ENCODE measurements at regions of chr17 and their contacts with region 1.

Region 1: GRCh38 chr17:77331301-77331864 is 190.6 kb downstream of the SEC14L1 start:
- DNase-seq: peak; percentile 90 to 96 (median 92)
- H3K4me3 ChIP-seq: peak overlapping the region; percentile 50
- H3K4me3 Mint-ChIP-seq: peak overlapping the region; percentile 73 to 91 (median 84)
- H3K27ac ChIP-seq: peak overlapping the region; percentile 45
- H3K27ac Mint-ChIP-seq: peak overlapping the region; percentile 83 to 96 (median 92)
- H3K4me1 ChIP-seq: peaks cover 46% of the 10 kb centered on the region
- H3K4me1 Mint-ChIP-seq: peaks cover 36 to 52% (median 49%) of the 10 kb centered on the region in 3 donors
- H3K27me3 ChIP-seq: no peaks in the 10 kb centered on the region
- H3K27me3 Mint-ChIP-seq: peaks cover 0 to 5% of the 10 kb centered on the region in 2 donors

Region 2: GRCh38 chr17:77178563-77178962 is 152.8 kb before region 1 on chr17:
- CTCF ChIA-PET with region 1: no interaction called
- POLR2A ChIA-PET with region 1: no interaction called
- DNase-seq: no peak
- H3K4me3 ChIP-seq: no peak overlapping the region
- H3K4me3 Mint-ChIP-seq: no peak overlapping the region
- H3K27ac ChIP-seq: no peak overlapping the region
- H3K27ac Mint-ChIP-seq: no peak overlapping the region
- H3K4me1 ChIP-seq: peaks cover 26% of the 10 kb centered on the region
- H3K4me1 Mint-ChIP-seq: peaks cover 27 to 42% (median 40%) of the 10 kb centered on the region in 3 donors
- H3K27me3 ChIP-seq: no peaks in the 10 kb centered on the region
- H3K27me3 Mint-ChIP-seq: peaks cover 0 to 3% of the 10 kb centered on the region in 2 donors

Region 3: DNA sequence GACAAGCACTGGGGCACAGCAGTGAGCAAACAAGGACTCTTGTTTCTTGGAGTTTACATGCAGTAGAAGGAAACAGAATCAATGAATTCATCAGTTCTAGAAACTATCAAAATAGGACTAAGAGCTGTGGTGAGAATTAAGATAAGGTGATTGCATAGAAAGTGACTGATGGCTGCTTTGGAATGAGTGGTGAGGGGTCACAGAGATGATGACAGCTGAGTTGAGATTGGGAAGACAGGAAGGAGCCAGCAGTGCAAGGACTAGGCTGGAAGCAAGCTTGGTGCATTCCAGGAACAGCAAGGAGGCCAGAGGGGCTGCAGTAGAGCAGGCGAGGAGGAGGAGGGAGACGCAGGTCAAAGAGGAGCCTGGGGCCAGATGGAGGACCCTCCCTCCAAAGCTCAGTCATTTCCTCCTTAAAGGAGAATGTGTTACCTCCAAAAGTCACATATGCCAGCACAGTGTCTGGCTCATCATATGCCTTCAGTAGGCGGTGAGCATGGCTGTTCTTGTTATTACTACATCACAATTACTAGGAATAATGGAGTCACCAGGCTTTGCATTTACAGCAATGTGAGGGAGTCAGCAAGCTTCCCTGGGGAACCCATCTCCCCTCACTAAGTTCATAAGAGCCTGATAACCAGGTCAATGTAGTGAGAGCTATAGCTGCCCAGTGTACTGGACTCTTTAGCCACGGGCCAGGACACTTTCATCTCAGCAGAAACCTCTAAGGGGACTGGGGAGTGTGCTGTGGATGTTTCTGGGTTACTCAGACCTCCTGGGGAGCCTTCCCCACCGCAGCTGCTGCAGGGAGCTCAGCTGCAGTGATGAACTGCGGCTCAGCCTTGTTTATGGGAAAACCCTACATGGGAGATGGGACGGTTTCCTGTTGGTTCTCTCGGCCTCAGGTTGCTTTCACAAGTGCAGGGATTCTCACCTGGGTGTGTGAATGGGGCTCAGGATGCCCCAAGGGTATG is 33.4 kb before region 1 on chr17:
- CTCF ChIA-PET with region 1: no interaction called
- POLR2A ChIA-PET with region 1: no interaction called
- DNase-seq: no peak
- H3K4me3 ChIP-seq: no peak overlapping the region
- H3K4me3 Mint-ChIP-seq: no peak overlapping the region
- H3K27ac ChIP-seq: no peak overlapping the region
- H3K27ac Mint-ChIP-seq: peak overlapping the region in 2 of 8 donors; percentile 10 to 19
- H3K4me1 ChIP-seq: no peaks in the 10 kb centered on the region
- H3K4me1 Mint-ChIP-seq: no peaks in the 10 kb centered on the region
- H3K27me3 ChIP-seq: no peaks in the 10 kb centered on the region
- H3K27me3 Mint-ChIP-seq: peaks cover 2 to 7% of the 10 kb centered on the region in 2 donors

Region 4: GRCh38 chr17:77349976-77350830 is 18.8 kb after region 1 on chr17:
- CTCF ChIA-PET with region 1: interaction called, 5 read pairs
- POLR2A ChIA-PET with region 1: interaction called, 12 read pairs
- DNase-seq: peak in 1 of 5 donors; percentile 13
- H3K4me3 ChIP-seq: no peak overlapping the region
- H3K4me3 Mint-ChIP-seq: no peak overlapping the region
- H3K27ac ChIP-seq: no peak overlapping the region
- H3K27ac Mint-ChIP-seq: no peak overlapping the region
- H3K4me1 ChIP-seq: peaks cover 14% of the 10 kb centered on the region
- H3K4me1 Mint-ChIP-seq: peaks cover 19 to 34% (median 34%) of the 10 kb centered on the region in 3 donors
- H3K27me3 ChIP-seq: no peaks in the 10 kb centered on the region
- H3K27me3 Mint-ChIP-seq: no peaks in the 10 kb centered on the region

Region 5: GRCh38 chr17:77382966-77383612 is 51.7 kb after region 1 on chr17:
- CTCF ChIA-PET with region 1: interaction called, 55 read pairs
- POLR2A ChIA-PET with region 1: interaction called, 7 read pairs
- DNase-seq: no peak
- H3K4me3 ChIP-seq: peak overlapping the region; percentile 62
- H3K4me3 Mint-ChIP-seq: peak overlapping the region; percentile 32 to 91 (median 78)
- H3K27ac ChIP-seq: no peak overlapping the region
- H3K27ac Mint-ChIP-seq: peak overlapping the region; percentile 87 to 96 (median 91)
- H3K4me1 ChIP-seq: peaks cover 94% of the 10 kb centered on the region
- H3K4me1 Mint-ChIP-seq: peaks cover 81 to 95% (median 88%) of the 10 kb centered on the region in 3 donors
- H3K27me3 ChIP-seq: no peaks in the 10 kb centered on the region
- H3K27me3 Mint-ChIP-seq: no peaks in the 10 kb centered on the region

Region 6: DNA sequence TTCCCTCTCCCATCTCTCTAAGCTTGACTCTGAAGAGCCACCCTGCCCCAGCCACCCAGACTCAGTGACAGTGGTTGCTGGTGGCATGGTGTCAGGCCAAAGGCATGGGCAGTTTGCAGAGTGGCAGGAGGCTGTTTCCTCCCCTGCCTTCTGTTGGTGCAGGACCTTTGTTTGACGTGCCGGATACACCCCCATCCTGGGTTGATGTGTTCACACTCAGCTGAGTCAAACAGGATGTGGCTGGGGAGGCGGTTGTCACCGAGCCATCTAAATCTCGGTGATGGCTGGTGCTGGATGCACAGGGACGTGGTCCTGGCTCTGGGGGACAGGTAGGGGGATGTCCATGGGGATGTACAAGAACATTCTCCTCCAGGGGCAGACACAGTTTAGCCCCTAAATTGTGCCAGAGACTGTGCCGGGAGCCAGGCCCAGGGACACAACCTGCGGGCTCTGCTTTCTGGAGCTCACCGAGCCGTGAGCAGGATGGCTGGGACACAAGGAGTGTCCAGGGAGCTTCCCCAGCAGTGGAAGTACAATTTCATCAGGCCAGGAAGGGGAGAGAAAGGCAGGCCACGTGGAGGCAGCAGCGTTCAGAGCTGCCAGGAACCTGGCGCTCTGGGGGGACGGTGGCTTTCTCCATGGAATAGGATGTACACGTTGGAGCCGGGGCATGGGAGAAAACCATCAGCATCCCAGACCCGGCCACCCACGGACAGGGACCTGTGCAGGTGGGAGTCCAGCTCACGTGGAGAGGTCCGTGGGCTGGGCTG is 73.6 kb after region 1 on chr17:
- CTCF ChIA-PET with region 1: interaction called, 61 read pairs
- POLR2A ChIA-PET with region 1: interaction called, 19 read pairs
- DNase-seq: peak; percentile 69 to 92 (median 83)
- H3K4me3 ChIP-seq: peak overlapping the region; percentile 89
- H3K4me3 Mint-ChIP-seq: peak overlapping the region; percentile 84 to 99 (median 96)
- H3K27ac ChIP-seq: peak overlapping the region; percentile 48
- H3K27ac Mint-ChIP-seq: peak overlapping the region; percentile 88 to 99 (median 98)
- H3K4me1 ChIP-seq: peaks cover 93% of the 10 kb centered on the region
- H3K4me1 Mint-ChIP-seq: peaks cover 80 to 98% (median 89%) of the 10 kb centered on the region in 3 donors
- H3K27me3 ChIP-seq: no peaks in the 10 kb centered on the region
- H3K27me3 Mint-ChIP-seq: peaks cover 0 to 3% of the 10 kb centered on the region in 2 donors

Region 7: GRCh38 chr17:77429919-77430752 is 98.8 kb after region 1 on chr17:
- CTCF ChIA-PET with region 1: interaction called, 46 read pairs
- POLR2A ChIA-PET with region 1: interaction called, 6 read pairs
- DNase-seq: peak; percentile 70 to 86 (median 74)
- H3K4me3 ChIP-seq: no peak overlapping the region
- H3K4me3 Mint-ChIP-seq: peak overlapping the region in 2 of 7 donors; percentile 8 to 27
- H3K27ac ChIP-seq: no peak overlapping the region
- H3K27ac Mint-ChIP-seq: peak overlapping the region; percentile 29 to 89 (median 72)
- H3K4me1 ChIP-seq: peaks cover 99% of the 10 kb centered on the region
- H3K4me1 Mint-ChIP-seq: peaks cover 70 to 98% (median 80%) of the 10 kb centered on the region in 3 donors
- H3K27me3 ChIP-seq: no peaks in the 10 kb centered on the region
- H3K27me3 Mint-ChIP-seq: no peaks in the 10 kb centered on the region

Region 8: GRCh38 chr17:77444984-77445759 is 113.8 kb after region 1 on chr17:
- CTCF ChIA-PET with region 1: interaction called, 14 read pairs
- POLR2A ChIA-PET with region 1: interaction called, 16 read pairs
- DNase-seq: peak; percentile 72 to 96 (median 94)
- H3K4me3 ChIP-seq: peak overlapping the region; percentile 66
- H3K4me3 Mint-ChIP-seq: peak overlapping the region; percentile 68 to 84 (median 81)
- H3K27ac ChIP-seq: peak overlapping the region; percentile 71
- H3K27ac Mint-ChIP-seq: peak overlapping the region; percentile 87 to 100 (median 98)
- H3K4me1 ChIP-seq: peaks cover 100% of the 10 kb centered on the region
- H3K4me1 Mint-ChIP-seq: peaks cover 89 to 97% (median 97%) of the 10 kb centered on the region in 3 donors
- H3K27me3 ChIP-seq: no peaks in the 10 kb centered on the region
- H3K27me3 Mint-ChIP-seq: peaks cover 0 to 5% of the 10 kb centered on the region in 2 donors

Region 9: DNA sequence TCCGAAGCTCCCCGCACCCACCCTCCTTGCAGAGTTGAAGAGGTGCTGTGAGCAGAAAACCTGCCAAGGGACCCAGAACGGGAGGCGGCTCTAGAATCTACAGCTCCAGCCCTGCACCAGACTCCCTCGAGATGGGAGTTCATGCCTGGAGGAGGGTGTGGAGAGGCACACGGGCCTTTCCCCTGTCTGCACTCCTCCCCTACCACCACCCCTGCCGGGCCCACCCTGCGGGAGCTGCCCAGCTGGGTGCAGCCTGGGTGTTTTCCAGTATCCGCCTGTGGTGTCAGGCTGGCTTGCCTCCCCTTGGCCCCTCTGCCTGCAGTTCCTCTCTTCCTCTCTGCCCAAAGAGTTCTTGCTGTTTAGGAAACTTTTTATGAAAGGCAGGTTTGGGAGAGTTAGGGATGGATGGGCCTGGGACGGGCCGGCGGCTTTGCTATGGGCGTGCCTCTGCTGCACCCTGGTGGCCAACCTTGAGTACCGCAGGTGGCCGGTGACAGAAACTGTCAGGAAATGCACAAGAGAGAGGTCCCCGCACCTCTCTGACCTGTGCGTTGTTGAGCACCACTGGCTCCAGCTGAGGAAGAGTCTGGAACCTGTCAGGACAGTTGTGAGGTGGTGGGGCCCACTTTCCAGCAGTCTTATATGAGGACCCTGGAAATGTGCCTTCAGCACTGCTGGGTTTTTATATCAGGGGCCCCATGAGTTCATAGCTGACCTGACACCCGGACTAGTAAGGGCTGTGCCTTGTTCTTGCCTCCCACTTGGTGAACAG is 163.5 kb after region 1 on chr17:
- CTCF ChIA-PET with region 1: interaction called, 54 read pairs
- POLR2A ChIA-PET with region 1: interaction called, 8 read pairs
- DNase-seq: peak; percentile 64 to 81 (median 72)
- H3K4me3 ChIP-seq: no peak overlapping the region
- H3K4me3 Mint-ChIP-seq: peak overlapping the region in 1 of 7 donors; percentile 12
- H3K27ac ChIP-seq: no peak overlapping the region
- H3K27ac Mint-ChIP-seq: peak overlapping the region; percentile 75 to 96 (median 86)
- H3K4me1 ChIP-seq: peaks cover 17% of the 10 kb centered on the region
- H3K4me1 Mint-ChIP-seq: peaks cover 19 to 40% (median 24%) of the 10 kb centered on the region in 3 donors
- H3K27me3 ChIP-seq: no peaks in the 10 kb centered on the region
- H3K27me3 Mint-ChIP-seq: no peaks in the 10 kb centered on the region